PC-3 (cell line): ENCODE measurements at regions of chr18 and their contacts with region 1.

Region 1: DNA sequence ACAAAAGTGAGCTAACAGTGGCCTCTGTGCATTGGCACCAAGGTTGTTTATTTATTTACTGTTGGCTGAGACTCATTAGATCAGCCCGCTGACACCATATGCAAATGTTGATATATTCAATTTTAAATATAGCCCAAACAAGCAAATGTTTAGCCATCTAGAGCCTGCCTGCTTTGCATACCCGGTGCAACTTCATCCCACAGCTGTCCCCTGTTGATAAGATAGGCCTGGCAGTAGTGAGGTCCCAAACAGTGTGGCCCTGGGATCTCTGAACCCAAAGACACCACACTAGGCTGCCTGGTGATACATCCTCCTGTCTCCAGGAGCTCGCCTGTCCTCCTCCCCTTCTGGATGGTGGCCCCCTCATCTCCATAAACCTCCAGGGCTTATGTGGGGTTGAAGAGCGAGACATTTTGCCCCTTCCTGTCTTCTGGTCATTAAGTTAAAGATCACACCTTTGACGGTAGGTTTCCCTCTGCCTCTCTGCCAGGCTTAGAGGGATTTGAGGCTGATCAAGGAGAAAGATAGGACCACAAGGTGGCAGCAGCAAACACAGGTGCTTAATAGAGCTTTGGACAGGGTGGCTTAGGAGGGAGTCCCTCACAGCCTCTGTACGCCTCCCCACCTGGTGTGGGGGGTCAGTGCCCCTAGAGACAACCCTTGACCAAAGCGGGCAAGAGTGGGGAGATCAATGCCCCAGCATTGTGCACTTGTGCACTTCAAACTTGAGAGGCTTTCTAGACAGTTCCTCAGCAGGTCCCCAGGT is 23.7 kb upstream of the MYO5B start:
- DNase-seq: peak; percentile 11
- ATAC-seq: peak; percentile 51; the same call in 1 of the 2 replicates
- H3K4me3 ChIP-seq: no peak overlapping the region
- H3K27ac ChIP-seq: no peak overlapping the region
- H3K4me1 ChIP-seq: no peaks in the 10 kb centered on the region
- H3K27me3 ChIP-seq: no peaks in the 10 kb centered on the region
- CTCF ChIP-seq: peak; percentile 50; the same call in 1 of the 2 replicates

Region 2: DNA sequence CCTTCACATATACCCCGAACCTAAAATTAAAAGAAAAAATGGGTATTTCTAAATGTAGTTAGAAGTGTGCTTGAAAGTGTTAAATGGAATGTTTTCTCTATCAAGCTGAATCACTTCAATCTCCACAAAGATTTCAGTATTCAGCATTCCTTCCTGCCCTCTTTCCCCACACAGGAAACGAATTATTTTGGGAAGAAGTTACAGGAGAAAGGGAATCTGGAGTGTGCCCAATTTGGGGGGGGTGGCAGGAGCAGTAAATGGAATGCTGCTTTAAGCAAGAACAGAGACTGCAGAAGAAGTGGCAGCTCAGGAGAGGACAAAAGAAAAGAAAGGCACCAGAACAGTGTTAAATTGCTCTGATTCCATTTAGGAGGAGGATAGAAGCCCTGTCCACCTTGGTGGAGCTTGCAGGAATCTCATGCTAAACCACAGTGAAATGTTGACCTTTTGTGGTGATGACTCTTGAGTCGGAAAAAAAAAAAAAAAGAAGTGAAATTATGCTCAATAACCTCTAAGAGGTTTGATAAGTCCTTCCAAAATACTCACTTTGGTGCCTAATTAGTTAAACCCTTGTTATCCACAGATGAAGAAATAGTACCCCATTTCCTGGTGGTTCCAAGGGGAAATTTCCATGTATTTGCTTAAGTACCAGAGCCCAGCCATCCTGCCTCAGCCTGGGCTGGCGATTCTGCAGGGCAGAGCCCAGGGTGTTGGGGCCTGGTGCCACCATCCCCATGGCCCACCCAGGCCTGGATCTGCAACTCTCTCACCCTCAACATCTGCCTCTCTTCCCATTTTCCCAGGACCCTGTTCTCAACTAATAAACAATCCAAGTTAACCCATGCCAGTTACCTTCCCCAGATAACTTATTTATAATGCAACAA is 80.2 kb before region 1 on chr18:
- CTCF ChIA-PET with region 1: no interaction called
- POLR2A ChIA-PET with region 1: interaction called, 14 read pairs
- intact Hi-C with region 1: no loop called
- DNase-seq: peak; percentile 14
- ATAC-seq: no peak
- H3K4me3 ChIP-seq: no peak overlapping the region
- H3K27ac ChIP-seq: no peak overlapping the region
- H3K4me1 ChIP-seq: peaks cover 2% of the 10 kb centered on the region; the same call in 1 of the 2 replicates
- H3K27me3 ChIP-seq: no peaks in the 10 kb centered on the region
- CTCF ChIP-seq: no peak

Region 3: GRCh38 chr18:50151926-50152325 is 66.7 kb before region 1 on chr18:
- CTCF ChIA-PET with region 1: no interaction called
- POLR2A ChIA-PET with region 1: no interaction called
- intact Hi-C with region 1: no loop called
- DNase-seq: peak; percentile 68
- ATAC-seq: peak; percentile 22; the same call in 1 of the 2 replicates
- H3K4me3 ChIP-seq: no peak overlapping the region
- H3K27ac ChIP-seq: peak overlapping the region; percentile 89
- H3K4me1 ChIP-seq: peaks cover 40% of the 10 kb centered on the region
- H3K27me3 ChIP-seq: no peaks in the 10 kb centered on the region
- CTCF ChIP-seq: no peak

Region 4: DNA sequence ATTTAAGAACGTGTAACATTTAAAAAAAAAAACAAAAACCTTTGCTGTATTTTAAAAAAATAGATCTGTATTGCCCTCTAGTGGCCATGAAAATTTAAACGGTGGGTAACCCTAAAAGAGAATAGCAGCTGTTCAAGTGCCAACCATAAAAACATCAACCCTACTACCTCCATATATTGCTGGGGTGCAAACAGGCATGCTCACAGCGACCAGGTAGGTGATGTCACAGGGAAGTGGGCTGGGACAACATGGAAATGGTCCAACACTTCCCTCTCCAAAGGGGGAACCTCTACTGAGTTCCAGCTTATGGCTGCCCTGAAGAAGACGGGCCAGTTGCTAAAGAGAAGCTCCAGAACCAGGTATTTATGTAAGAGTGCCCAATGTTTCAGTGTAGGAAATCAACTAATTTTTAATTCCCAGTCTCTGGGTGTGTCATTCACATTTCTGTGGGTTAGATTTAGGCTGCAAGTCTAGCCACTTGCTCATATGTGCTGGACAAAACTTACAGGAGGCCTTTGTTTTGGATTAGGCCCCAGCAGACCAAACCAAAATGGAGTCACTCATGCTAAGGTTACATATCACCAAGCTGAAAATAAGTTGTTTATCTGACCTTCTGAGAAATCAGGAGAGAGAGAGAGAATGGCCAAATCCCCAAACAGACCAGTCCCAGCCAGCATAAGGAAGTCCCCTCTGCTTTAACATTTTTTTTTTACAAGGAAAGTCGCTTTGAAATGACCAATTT is 210.8 kb after region 1 on chr18:
- CTCF ChIA-PET with region 1: no interaction called
- POLR2A ChIA-PET with region 1: no interaction called
- intact Hi-C with region 1: loop called (anchors 5 kb)
- DNase-seq: peak; percentile 38
- ATAC-seq: no peak
- H3K4me3 ChIP-seq: no peak overlapping the region
- H3K27ac ChIP-seq: no peak overlapping the region
- H3K4me1 ChIP-seq: no peaks in the 10 kb centered on the region
- H3K27me3 ChIP-seq: no peaks in the 10 kb centered on the region
- CTCF ChIP-seq: peak; percentile 38; the same call in 1 of the 2 replicates